ENCODE measurements at regions of chr4 and their contacts with region 1.

Region 1: GRCh38 chr4:87848622-87849351 is 16.0 kb downstream of the MEPE start:
- DNase-seq: no peak
- CTCF ChIP-seq: peak; percentile 63

Region 2: DNA sequence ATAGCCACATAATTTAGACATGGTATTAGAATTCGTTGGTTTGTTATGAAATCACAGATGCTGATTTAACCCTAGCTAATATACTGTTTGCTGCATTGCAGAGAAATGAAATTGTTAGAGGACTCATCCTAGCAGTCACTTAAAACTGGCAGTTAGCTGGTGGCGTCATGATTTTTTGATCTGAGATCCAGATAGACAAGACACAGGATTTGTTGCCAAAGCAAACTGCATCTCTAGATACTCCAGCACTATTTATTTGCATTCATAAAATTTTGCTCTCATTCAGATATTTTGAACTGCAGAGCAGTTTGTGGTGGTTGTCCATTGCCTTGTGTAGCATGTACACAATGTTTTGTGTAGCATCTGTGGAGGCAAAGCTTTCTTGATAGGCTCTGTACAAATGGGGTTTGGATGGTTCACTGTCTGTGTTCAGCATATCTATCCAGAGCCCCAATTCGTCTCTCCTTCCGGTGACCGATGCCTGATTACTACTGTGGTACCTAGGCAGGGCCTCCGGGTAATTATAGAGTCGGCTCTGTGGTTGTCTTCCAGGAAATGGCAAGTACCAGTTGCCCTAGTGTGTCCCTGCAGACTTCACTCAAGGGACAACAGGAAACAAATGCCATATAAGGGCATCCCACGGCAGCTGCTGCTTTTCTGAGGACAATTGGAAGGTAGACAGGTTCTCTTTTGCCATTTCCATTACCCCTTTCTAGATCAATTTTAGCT is 289.5 kb before region 1 on chr4:
- in situ Hi-C with region 1: no loop called
- DNase-seq: no peak
- CTCF ChIP-seq: no peak

Region 3: GRCh38 chr4:87679449-87680169 is 169.2 kb before region 1 on chr4:
- in situ Hi-C with region 1: loop called (anchors 10 kb)
- DNase-seq: peak; percentile 34
- CTCF ChIP-seq: no peak

Region 4: DNA sequence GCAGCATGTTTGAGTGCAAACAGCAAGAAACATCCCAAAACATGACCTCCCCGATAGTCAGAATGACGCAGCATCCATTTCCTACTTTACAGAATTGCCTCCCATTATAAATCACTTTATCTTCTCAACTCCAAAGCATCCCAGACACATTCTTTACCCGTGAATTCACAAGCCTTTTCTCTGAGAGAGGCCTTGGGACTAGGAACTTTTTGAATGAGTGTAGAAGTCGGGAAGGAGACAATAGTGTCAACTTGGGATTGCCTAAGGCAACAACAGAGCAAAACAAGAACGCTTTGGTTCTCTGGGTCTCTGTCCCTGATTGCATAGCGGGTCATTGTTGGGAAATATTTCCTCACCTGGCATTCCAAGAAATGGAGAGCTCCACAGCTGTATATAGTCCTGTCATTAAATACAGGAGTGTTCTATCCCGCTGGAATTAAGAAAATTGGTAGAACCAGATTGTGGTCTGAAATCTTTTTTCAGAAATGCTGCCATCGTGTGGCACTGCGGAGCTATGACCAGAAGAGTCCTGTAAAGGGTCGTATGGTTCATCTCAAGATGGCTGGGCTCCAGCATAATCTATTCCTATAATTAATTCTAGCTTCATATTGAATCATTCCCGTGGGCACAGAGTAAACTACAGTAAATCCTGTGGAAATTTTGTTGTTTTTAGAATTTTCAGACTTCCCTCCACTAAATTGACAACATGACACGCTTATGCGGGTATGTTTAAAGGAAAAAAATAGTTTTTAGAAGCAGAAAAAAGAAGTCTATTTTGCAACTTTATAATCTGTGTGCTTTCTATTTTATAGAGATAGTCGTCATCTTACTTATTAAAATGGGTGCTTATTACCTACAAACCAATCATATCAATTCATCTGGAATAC is 124.7 kb after region 1 on chr4:
- in situ Hi-C with region 1: loop called (anchors 10 kb)
- DNase-seq: peak; percentile 43
- CTCF ChIP-seq: peak; percentile 57

Region 5: GRCh38 chr4:88211473-88212252 is 362.9 kb after region 1 on chr4:
- in situ Hi-C with region 1: loop called (anchors 10 kb)
- DNase-seq: peak; percentile 55
- CTCF ChIP-seq: peak; percentile 62

Region 6: GRCh38 chr4:88523325-88524129 is 674.7 kb after region 1 on chr4 and contains the start of gene PYURF:
- in situ Hi-C with region 1: loop called (anchors 25 kb)
- DNase-seq: peak; percentile 89
- CTCF ChIP-seq: no peak

Measured in GM13976 (cell line).